Naive thymus-derived CD8-positive, alpha-beta T cell (primary cell): ENCODE measurements at regions of chr2 and their contacts with region 1.

Region 1: GRCh38 chr2:37196320-37197195 is at the start of gene CEBPZOS:
- DNase-seq: peak; percentile 87 to 96 (median 90)
- ATAC-seq: peak; percentile 90 to 95
- H3K4me3 Mint-ChIP-seq: peak within 1 kb of the TSS; percentile 92 to 100 (median 98)
- H3K27ac Mint-ChIP-seq: peak within 1 kb of the TSS; percentile 96 to 100 (median 98)
- H3K4me1 Mint-ChIP-seq: peaks cover 13 to 35% (median 26%) of the 10 kb centered on the region in 4 donors
- H3K27me3 Mint-ChIP-seq: no peaks in the 10 kb centered on the region
- polyA plus RNA-seq, gene CEBPZOS: 43.0 to 44.5 (median 43.8) TPM

Region 2: GRCh38 chr2:37156857-37157714 is 39.5 kb before region 1 on chr2 and contains the start of gene EIF2AK2:
- POLR2A ChIA-PET with region 1: interaction called, 17 read pairs
- DNase-seq: peak; percentile 75 to 91 (median 82)
- ATAC-seq: peak; percentile 94 to 96
- H3K4me3 Mint-ChIP-seq: peak within 1 kb of the TSS; percentile 88 to 99 (median 94)
- H3K27ac Mint-ChIP-seq: peak within 1 kb of the TSS; percentile 88 to 98 (median 95)
- H3K4me1 Mint-ChIP-seq: peaks cover 36 to 59% (median 54%) of the 10 kb centered on the region in 4 donors
- H3K27me3 Mint-ChIP-seq: no peaks in the 10 kb centered on the region
- polyA plus RNA-seq, gene EIF2AK2: 18.8 to 28.8 (median 21.6) TPM

Region 3: DNA sequence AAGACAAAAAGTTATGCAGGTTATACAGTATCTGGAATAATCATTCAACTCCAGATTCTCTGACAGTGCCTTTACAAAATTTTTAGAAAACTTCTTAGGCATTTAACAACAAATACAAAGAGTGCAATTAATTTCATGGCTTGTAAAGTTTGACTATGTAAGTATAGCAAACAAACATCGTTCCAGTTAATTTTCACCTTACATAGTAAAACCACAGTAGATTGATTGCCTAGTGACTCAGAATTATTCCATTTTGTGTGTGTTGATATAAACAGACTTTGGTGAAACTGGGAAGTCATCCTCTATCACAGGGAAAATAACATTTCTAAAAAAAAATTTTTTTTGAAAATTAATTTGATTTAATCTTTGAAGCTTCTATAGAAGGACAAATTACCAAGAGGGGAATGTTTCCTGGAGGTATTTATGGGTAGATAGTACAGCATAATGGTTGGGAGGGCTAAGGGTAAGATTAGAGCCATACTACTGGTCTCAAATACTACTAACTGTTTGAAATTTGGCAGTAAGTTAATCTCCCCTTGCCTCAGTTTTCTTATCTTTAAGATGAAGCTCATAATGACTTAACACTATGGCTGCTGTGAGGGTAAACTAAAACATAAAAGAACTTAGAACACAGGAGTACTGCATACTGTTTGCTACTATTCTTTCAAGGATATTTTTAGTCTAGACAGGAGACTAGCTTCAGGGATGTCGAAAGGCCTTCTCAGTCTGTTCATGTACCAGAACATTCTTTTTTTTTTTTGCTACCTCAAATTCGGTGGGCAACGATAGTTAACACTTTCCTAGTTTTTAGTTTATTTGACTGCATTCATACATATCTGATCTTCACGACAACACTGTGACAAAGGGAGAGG is 54.5 kb after region 1 on chr2:
- POLR2A ChIA-PET with region 1: no interaction called
- DNase-seq: no peak
- ATAC-seq: no peak
- H3K4me3 Mint-ChIP-seq: no peak overlapping the region
- H3K27ac Mint-ChIP-seq: peak overlapping the region in 5 of 10 donors; percentile 28 to 73 (median 55)
- H3K4me1 Mint-ChIP-seq: peaks cover 0 to 2% (median 1%) of the 10 kb centered on the region in 4 donors
- H3K27me3 Mint-ChIP-seq: no peaks in the 10 kb centered on the region